ENCODE measurements at regions of chr6 and their contacts with region 1.

Region 1: DNA sequence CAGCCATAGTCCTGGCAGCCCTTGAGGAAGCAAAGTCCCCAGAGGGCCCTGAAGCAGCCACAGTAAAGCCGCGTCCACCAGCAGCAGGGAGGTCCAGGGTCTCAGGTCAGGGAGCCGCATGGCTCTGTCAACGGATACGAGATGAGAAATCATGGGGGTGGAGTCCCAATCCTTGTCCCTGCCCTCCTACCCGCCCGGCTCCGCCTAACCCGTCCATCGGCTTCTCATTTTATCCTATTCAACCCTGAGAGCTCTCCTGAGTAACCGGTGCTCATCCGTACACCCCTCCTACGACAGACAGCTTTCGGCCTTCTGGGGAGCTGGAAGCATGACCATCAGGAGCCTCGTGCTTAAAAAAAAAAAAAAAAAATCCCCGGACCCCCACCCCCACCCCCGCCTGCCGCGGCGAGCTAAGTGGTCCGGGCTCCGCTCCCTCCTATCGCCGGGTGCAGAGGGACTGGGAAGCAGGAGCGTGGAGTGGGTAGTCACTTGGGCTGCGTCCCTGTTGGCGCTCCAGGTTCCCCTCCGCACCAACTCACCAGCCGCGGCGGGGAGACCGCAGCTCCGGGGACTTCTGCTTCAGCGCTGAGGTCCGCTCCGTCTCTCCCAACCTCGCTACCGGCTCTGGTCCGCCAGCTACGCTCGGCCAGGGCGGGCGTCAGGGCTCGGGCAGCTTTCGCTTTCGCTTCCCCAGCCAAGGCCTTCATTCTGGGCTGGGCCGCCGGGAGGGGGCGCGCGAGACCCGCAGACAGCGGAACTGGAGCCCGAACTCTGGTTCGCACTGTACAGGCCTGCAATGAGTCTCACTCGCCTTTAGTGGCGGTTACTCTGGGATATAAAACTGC is at the start of gene TAP2:
- DNase-seq: peak; percentile 79
- ATAC-seq: peak; percentile 92
- H3K4me3 ChIP-seq: peak within 1 kb of the TSS; percentile 83 to 84
- H3K27ac ChIP-seq: peak within 1 kb of the TSS; percentile 81
- H3K4me1 ChIP-seq: peaks cover 6 to 20% of the 10 kb centered on the region in 2 experiments; a peak in 3 of 4 replicates
- H3K27me3 ChIP-seq: no peaks in the 10 kb centered on the region
- CTCF ChIP-seq: peak; percentile 88 to 96 (median 91)
- POLR2A ChIP-seq: peak; percentile 84
- RAD21 ChIP-seq: peak; percentile 97
- total RNA-seq, gene TAP2: 59.9 TPM

Region 2: DNA sequence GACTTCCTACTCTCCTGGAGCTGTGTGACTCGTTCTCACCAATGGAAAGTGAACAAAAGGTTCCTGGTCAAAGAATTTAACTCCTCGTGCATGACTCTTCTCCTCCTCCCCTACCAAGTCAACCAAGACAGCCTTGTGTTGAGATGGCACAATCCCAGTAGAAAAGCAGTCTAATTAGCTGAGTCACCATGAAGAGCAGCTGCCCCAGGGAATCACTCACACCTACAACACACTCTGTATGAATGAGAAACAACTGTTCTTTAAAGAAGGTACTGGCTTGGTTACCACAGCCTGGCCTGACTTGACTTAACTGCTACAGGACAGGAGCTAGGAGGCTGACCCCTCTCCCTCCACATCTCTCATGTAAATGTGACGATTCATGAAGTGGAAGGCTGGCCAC is 18.6 kb before region 1 on chr6:
- CTCF ChIA-PET with region 1: interaction called, 15 read pairs
- POLR2A ChIA-PET with region 1: interaction called, 3 read pairs
- RAD21 ChIA-PET with region 1: no interaction called
- intact Hi-C with region 1: no loop called
- DNase-seq: peak; percentile 16
- ATAC-seq: peak; percentile 71
- H3K4me3 ChIP-seq: no peak overlapping the region
- H3K27ac ChIP-seq: no peak overlapping the region; the same call in 1 of the 2 replicates
- H3K4me1 ChIP-seq: peaks cover 0 to 25% of the 10 kb centered on the region in 2 experiments; a peak in 2 of 4 replicates
- H3K27me3 ChIP-seq: no peaks in the 10 kb centered on the region
- CTCF ChIP-seq: no peak
- POLR2A ChIP-seq: no peak
- RAD21 ChIP-seq: no peak

Region 3: GRCh38 chr6:32853541-32854375 is 15.4 kb after region 1 on chr6 and contains the starts of genes PSMB9 and TAP1:
- CTCF ChIA-PET with region 1: interaction called, 80 read pairs
- POLR2A ChIA-PET with region 1: interaction called, 19 read pairs
- RAD21 ChIA-PET with region 1: interaction called, 3 to 16 read pairs
- intact Hi-C with region 1: loop called (anchors 1 kb)
- DNase-seq: peak; percentile 88
- ATAC-seq: peak; percentile 93
- H3K4me3 ChIP-seq: peak within 1 kb of the TSS; percentile 88 to 95
- H3K27ac ChIP-seq: peak within 1 kb of the TSS; percentile 84
- H3K4me1 ChIP-seq: peaks cover 8 to 17% of the 10 kb centered on the region in 2 experiments; a peak in 3 of 4 replicates
- H3K27me3 ChIP-seq: no peaks in the 10 kb centered on the region
- CTCF ChIP-seq: peak; percentile 64 to 93 (median 81)
- POLR2A ChIP-seq: peak; percentile 42
- RAD21 ChIP-seq: peak; percentile 76
- total RNA-seq, gene PSMB9: 8.1 TPM
- total RNA-seq, gene TAP1: 32.2 TPM

Region 4: GRCh38 chr6:32933636-32934085 is 95.3 kb after region 1 on chr6:
- CTCF ChIA-PET with region 1: interaction called, 10 read pairs
- POLR2A ChIA-PET with region 1: no interaction called
- RAD21 ChIA-PET with region 1: no interaction called
- intact Hi-C with region 1: no loop called
- DNase-seq: peak; percentile 56
- ATAC-seq: peak; percentile 92
- H3K4me3 ChIP-seq: no peak overlapping the region
- H3K27ac ChIP-seq: no peak overlapping the region
- H3K4me1 ChIP-seq: no peaks in the 10 kb centered on the region; a peak in 1 of 4 replicates
- H3K27me3 ChIP-seq: no peaks in the 10 kb centered on the region
- CTCF ChIP-seq: peak; percentile 82 to 90 (median 90)
- POLR2A ChIP-seq: no peak
- RAD21 ChIP-seq: peak; percentile 74

Region 5: DNA sequence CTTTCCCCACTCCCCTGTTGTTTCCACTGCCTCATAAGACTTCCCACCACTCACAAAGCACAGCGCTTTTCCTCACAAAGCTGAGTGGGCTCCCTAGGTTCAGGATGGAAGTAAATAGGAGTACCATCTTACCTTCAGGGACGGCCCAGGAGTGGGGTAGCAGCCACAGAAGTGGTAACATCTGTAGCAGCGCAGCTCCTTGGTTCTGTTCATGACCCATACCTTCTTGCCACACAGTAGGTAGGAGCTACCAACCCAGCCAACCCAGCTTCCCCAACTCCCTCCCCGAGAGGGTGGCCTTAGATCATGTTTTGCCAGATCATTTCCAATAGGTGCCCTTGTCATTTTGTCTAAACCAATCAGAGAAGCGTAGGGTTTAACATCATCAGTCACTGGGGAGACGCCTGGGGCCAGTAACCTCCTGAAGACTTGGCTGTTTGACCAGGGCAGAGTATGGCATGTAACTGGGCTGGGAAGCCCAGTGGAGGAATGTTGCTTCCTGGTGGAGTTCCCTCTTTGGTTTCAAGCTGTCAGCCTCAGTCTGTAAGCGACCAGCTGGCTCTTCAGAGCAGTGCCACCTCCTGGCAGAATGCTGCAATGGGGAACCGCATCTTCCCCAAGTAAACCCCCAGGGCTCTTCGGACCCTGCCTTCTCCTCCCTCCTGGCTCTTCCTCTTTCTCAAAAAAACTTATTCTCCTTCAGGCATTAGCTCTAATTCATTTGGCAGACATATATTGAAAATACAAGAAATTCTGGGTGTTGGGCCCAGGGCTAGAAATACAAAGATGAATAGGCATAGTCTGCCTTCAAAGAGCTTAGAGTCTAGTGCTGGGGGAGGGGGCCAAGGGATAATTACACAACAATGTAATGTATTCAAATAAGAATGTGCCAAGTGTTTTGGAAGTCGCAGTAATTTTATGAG is 114.7 kb after region 1 on chr6 and contains the start of gene HLA-DMA:
- CTCF ChIA-PET with region 1: interaction called, 16 read pairs
- POLR2A ChIA-PET with region 1: no interaction called
- RAD21 ChIA-PET with region 1: no interaction called
- intact Hi-C with region 1: loop called (anchors 5 kb)
- DNase-seq: peak; percentile 81
- ATAC-seq: peak; percentile 95
- H3K4me3 ChIP-seq: no peak within 1 kb of the TSS
- H3K27ac ChIP-seq: no peak within 1 kb of the TSS
- H3K4me1 ChIP-seq: peaks cover 0 to 17% of the 10 kb centered on the region in 2 experiments; a peak in 2 of 4 replicates
- H3K27me3 ChIP-seq: no peaks in the 10 kb centered on the region
- CTCF ChIP-seq: peak; percentile 21 to 69 (median 68); a peak in 5 of 6 replicates
- POLR2A ChIP-seq: no peak
- RAD21 ChIP-seq: peak; percentile 35
- total RNA-seq, gene HLA-DMA: 12.1 TPM

Measured in HCT116 (cell line).